ENCODE measurements at regions of chr4 and their contacts with region 1.

Region 1: DNA sequence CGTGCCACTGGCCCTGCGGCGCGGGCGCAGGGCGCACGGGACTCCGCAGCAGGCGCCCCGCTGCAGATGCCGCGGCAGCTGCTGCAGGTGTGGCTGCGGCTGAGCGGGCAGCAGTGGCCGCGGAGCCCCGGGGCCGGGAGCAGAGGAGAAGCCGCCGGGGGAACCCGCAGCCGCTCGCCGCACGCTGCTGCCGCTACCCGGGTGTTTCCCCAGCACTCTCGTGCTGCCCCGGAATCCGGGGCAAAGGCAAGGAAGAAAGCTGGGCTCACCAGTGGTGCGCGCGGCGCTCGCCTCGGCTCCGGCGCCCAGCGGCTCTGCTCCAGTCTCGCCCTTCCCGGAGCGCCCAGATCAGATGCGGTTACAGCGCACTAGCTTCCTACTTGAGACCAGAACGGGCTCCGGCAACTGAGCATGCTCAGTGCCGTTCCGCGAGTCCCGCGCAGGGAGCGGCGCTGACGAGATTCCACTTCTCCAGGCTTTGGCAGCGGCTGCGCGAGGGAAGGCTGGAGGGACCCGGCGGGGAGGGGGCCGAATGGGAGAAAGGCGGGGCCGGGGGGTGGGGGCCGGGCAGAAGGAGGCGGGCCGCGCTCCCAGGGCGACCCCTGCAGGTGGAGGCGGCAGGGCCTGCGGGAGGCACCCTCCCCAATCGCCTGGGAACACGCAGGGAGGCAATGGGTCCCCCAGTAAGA is at the start of gene APBB2:
- DNase-seq: peak; percentile 27
- H3K4me3 ChIP-seq: peak within 1 kb of the TSS; percentile 64 to 96 (median 86)
- H3K27ac ChIP-seq: peak within 1 kb of the TSS; percentile 78 to 94 (median 92)
- H3K4me1 ChIP-seq: peaks cover 0 to 48% (median 14%) of the 10 kb centered on the region in 3 donors
- H3K27me3 ChIP-seq: peaks cover 0 to 6% (median 0%) of the 10 kb centered on the region in 4 donors
- CTCF ChIP-seq: peak; percentile 49 to 77 (median 56)
- POLR2A ChIP-seq: peak in 3 of 4 donors; percentile 21 to 80 (median 76)
- total RNA-seq, gene APBB2: 12.2 to 29.2 (median 20.1) TPM

Region 2: DNA sequence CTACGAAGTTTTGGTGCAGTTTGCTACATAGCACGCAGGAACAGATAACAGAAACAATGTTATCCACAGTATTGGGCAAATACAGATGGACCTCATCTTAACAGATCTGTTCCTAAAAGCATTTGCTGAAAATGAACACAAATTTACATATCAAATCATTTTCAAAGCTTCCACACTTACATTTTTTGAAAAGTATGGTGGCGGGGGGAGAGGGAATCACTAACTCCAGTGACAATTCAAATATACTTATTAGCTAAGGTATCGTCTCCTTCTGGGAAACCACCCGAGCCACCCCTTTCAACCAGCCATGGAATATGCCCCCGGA is 289.5 kb before region 1 on chr4:
- intact Hi-C with region 1: loop called (anchors 5 kb)
- DNase-seq: no peak
- H3K4me3 ChIP-seq: no peak overlapping the region
- H3K27ac ChIP-seq: no peak overlapping the region
- H3K4me1 ChIP-seq: peaks cover 0 to 13% (median 0%) of the 10 kb centered on the region in 3 donors
- H3K27me3 ChIP-seq: no peaks in the 10 kb centered on the region
- CTCF ChIP-seq: no peak
- POLR2A ChIP-seq: no peak

Region 3: GRCh38 chr4:40976343-40976742 is 237.9 kb before region 1 on chr4:
- intact Hi-C with region 1: loop called (anchors 5 kb)
- DNase-seq: no peak
- H3K4me3 ChIP-seq: no peak overlapping the region
- H3K27ac ChIP-seq: no peak overlapping the region
- H3K4me1 ChIP-seq: no peaks in the 10 kb centered on the region
- H3K27me3 ChIP-seq: no peaks in the 10 kb centered on the region
- CTCF ChIP-seq: peak in 5 of 6 experiments; percentile 52 to 82 (median 70)
- POLR2A ChIP-seq: no peak

Region 4: GRCh38 chr4:41281038-41281634 is 66.9 kb after region 1 on chr4:
- intact Hi-C with region 1: no loop called
- DNase-seq: no peak
- H3K4me3 ChIP-seq: no peak overlapping the region
- H3K27ac ChIP-seq: no peak overlapping the region
- H3K4me1 ChIP-seq: peaks cover 0 to 6% (median 0%) of the 10 kb centered on the region in 3 donors
- H3K27me3 ChIP-seq: peaks cover 0 to 10% (median 0%) of the 10 kb centered on the region in 4 donors
- CTCF ChIP-seq: peak; percentile 73 to 92 (median 86)
- POLR2A ChIP-seq: no peak

Region 5: GRCh38 chr4:41406113-41406516 is 191.8 kb after region 1 on chr4:
- intact Hi-C with region 1: no loop called
- DNase-seq: no peak
- H3K4me3 ChIP-seq: no peak overlapping the region
- H3K27ac ChIP-seq: no peak overlapping the region
- H3K4me1 ChIP-seq: no peaks in the 10 kb centered on the region
- H3K27me3 ChIP-seq: no peaks in the 10 kb centered on the region
- CTCF ChIP-seq: no peak
- POLR2A ChIP-seq: no peak

Measured in esophagus squamous epithelium (tissue), 5 donors.